ENCODE measurements at regions of chr2 and their contacts with region 1.

Region 1: DNA sequence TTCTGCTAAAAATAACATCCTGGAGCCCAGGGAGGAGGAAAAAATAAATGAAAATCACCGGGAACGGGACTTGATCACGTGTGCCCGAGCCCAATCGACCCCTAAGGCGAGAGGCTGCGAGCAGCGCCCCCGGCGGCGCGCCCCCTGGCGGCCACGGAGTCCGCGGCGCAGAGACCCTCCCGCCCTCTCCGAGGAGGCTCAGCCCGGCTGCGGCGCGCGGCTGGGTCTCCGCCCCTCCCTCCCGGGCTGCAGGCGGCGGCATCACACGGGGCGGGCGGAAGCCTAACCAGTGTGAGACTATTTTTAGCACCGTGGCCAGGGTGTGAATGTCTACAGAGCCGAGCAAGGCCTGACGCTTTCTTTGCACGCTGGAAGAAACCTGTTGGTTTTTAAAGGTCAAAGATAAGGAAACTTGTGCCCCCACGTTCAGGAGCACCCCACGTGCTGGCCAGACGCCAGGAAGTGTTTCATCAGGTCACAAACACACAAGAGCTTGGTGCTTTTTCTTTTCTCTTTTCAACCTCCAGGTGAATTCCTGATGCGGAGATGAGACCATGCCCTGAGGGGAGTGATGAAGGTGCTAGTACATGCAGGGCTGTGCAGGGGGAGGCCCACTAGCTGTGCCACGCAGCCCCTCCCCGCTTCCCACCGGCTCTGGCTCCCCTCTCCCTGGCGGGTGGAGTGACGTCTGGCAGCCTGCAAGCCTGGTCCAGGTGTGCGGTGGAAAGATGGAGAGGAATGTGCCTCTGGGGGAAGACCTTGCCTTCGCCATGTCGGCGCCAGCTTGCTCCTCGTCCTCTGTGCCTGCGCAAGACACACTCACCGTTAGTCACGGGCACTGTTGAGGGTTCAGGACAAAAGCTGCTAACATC is 35.3 kb upstream of the DNMT3A start:
- DNase-seq: peak; percentile 95
- H3K4me3 Mint-ChIP-seq: peak overlapping the region; percentile 49
- H3K27ac Mint-ChIP-seq: peak overlapping the region; percentile 96
- H3K4me1 Mint-ChIP-seq: peaks cover 28% of the 10 kb centered on the region
- H3K27me3 Mint-ChIP-seq: no peaks in the 10 kb centered on the region

Region 2: GRCh38 chr2:25309402-25309801 is 67.6 kb before region 1 on chr2:
- CTCF ChIA-PET with region 1: interaction called, 10 read pairs
- POLR2A ChIA-PET with region 1: no interaction called
- DNase-seq: peak; percentile 66
- H3K4me3 Mint-ChIP-seq: no peak overlapping the region
- H3K27ac Mint-ChIP-seq: no peak overlapping the region
- H3K4me1 Mint-ChIP-seq: peaks cover 54% of the 10 kb centered on the region
- H3K27me3 Mint-ChIP-seq: no peaks in the 10 kb centered on the region

Region 3: DNA sequence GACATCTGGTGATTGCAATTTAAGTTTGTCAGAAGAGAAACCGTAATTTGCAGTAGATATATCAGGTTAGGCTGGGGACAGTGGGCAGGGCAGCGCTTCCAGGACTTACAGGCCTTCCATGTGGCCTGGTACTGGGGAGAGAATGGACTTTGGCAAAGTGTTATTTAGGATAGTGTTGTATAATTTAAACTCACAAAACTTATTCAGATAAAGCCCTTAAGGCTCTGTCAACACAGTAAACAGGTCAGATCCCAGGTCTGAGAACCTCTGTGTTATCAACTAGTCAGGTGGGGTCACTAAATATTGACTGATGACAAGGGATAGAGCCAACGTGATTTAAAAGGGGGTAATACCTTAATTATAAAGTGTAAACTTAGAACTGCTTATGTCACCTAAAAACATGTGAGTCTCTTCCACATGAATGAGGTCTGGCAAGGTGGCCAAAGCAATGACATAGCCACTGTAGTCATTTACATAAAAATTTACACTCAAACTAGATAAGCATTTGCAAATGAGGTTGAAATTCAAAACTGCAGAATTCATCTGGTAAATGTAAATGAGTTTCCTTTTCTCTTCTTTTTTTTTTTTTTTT is 44.9 kb after region 1 on chr2:
- CTCF ChIA-PET with region 1: no interaction called
- POLR2A ChIA-PET with region 1: no interaction called
- DNase-seq: no peak
- H3K4me3 Mint-ChIP-seq: no peak overlapping the region
- H3K27ac Mint-ChIP-seq: no peak overlapping the region
- H3K4me1 Mint-ChIP-seq: peaks cover 12% of the 10 kb centered on the region
- H3K27me3 Mint-ChIP-seq: no peaks in the 10 kb centered on the region

Region 4: DNA sequence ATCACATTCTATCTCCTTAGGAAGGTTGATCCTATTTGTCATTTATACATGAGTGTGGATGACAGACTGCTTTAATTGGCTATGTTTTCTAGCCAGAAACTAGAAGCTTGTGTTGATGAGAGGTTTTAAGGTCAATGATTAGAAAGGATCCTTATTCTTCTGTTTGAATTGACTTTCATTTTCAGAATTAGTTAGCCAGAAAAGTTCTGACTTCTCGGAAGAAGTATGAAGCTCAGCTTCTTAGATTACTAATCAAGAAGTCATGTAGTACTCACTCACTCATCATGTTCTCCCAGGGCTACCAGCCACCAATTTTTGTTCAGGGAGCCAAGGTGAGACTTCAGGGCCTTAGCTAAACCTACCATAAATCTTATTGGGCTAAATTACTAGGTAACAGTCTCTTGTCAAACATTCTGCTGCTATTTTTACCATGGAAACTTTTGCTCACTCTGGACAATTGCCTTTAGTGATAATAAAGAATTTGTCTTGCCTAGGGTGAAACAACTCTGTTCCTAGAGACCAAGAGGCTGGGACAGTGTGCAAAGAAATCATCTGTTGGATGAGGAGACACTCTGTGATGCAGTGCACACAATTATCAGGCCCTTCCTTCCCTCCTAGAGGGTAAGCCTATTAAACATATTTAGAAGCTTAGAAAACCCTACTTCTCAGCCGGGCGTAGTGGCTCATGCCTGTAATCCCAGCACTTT is 76.4 kb after region 1 on chr2:
- CTCF ChIA-PET with region 1: interaction called, 8 read pairs
- POLR2A ChIA-PET with region 1: interaction called, 15 read pairs
- DNase-seq: peak; percentile 37
- H3K4me3 Mint-ChIP-seq: no peak overlapping the region
- H3K27ac Mint-ChIP-seq: peak overlapping the region; percentile 83
- H3K4me1 Mint-ChIP-seq: peaks cover 29% of the 10 kb centered on the region
- H3K27me3 Mint-ChIP-seq: no peaks in the 10 kb centered on the region

Measured in activated CD4-positive, alpha-beta memory T cell treated with anti-CD3 and anti-CD28 coated beads, Interleukin-2, amount 10 ng/mL, durations not matched to agents 7 days and 5 days (primary cell).